Dorsolateral prefrontal cortex (tissue), 120 donors: ENCODE measurements at regions of chr1 and their contacts with region 1.

Region 1: DNA sequence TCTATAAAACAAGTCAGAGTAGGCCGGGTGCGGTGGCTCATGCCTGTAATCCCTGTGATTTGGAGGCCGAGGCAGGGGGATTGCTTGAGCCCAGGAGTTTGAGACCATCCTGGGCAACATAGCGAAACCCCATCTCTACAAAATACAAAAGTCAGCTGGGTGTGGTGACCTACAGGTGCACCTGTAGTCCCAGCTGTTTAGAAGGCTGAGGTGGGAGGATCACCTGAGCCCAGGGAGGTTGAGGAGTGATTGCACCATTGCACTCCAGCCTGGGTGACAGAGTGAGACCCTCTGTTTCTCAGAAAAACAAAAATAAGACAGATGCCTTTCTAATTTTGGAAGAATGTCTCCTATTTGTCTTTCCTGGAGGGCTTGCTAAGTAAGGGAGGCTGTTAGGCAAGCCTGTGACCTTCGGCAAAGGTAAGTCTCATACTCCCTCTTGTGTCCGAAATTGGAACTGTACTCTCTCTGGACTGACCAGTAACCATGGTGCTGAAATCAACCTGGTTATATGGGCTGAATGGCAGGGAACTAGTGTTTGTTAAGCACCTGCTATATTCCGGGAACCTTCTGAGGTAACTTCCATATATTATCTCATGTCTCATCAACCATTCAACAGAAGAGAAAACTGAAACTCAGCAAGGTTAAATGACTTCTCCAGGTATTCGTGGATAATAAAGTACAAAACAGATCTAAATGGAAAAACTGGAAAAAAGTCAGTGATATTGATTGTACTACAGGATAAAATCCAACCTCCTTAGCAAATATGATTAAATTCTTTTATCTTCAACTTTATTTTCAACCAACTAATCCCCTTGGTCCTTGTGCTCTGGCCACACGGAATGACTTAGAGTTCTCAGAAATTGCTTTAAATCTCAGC is 11.8 kb upstream of the RAB3B start:
- DNase-seq: peak in 2 of 10 donors; percentile 27 to 39
- H3K4me3 ChIP-seq: no peak overlapping the region
- H3K27ac ChIP-seq: no peak overlapping the region
- H3K27me3 ChIP-seq: peaks cover 0 to 17% (median 0%) of the 10 kb centered on the region in 45 donors
- CTCF ChIP-seq: peak; percentile 71 to 98 (median 91)

Region 2: GRCh38 chr1:51897699-51898031 is 104.6 kb before region 1 on chr1:
- intact Hi-C with region 1: loop called (anchors 2 kb)
- DNase-seq: no peak
- H3K4me3 ChIP-seq: no peak overlapping the region
- H3K27ac ChIP-seq: no peak overlapping the region
- H3K27me3 ChIP-seq: peaks cover 0 to 22% (median 0%) of the 10 kb centered on the region in 45 donors
- CTCF ChIP-seq: no peak